IMR-90 (cell line): ENCODE measurements at regions of chr2 and their contacts with region 1.

Region 1: DNA sequence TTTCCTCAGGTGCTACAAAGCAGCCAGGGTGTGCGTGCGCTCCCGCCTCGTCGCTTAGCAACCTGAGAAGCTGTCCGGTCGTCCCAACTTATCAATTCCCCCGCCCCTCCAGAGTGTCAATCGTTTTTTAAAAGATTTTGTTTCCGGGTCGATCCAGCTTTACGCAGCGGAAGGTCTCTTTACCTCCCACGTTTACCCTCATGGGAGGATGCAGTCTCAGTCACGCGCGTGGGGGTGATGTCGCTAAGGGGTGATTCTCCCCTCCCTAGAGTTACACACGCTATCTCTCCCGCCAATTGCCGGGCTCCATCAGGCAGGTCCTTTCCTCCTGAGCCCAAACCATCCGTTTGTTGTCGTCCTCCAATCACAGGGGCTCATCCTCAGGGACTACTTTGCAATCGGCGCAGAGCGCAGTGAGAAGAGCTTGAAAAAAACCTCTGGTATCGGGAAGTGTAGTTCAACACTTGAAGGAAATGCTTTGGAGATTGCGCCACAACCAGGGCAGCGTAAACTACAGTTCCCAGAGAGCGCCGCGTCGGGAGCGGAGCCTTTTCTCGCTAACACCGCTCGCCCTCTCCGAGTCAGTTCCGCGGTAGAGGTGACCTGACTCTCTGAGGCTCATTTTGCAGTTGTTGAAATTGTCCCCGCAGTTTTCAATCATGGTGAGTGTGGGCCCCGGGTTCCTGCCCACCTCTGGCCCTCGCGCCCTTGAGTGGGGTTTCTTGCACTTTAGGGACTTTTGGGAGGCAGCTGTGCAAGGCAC is at the starts of genes MDH1 and WDPCP:
- DNase-seq: peak; percentile 100
- ATAC-seq: peak; percentile 93
- H3K4me3 ChIP-seq: peak within 1 kb of the TSS; percentile 77
- H3K27ac ChIP-seq: peak within 1 kb of the TSS; percentile 68
- H3K4me1 ChIP-seq: peaks cover 2% of the 10 kb centered on the region; the same call in 1 of the 2 replicates
- H3K27me3 ChIP-seq: no peaks in the 10 kb centered on the region
- CTCF ChIP-seq: no peak
- POLR2A ChIP-seq: peak; percentile 59; the same call in 1 of the 2 replicates
- RAD21 ChIP-seq: no peak
- total RNA-seq, gene MDH1: 212 and 248 TPM in 2 replicates
- total RNA-seq, gene WDPCP: 7.8 and 10.2 TPM in 2 replicates

Region 2: DNA sequence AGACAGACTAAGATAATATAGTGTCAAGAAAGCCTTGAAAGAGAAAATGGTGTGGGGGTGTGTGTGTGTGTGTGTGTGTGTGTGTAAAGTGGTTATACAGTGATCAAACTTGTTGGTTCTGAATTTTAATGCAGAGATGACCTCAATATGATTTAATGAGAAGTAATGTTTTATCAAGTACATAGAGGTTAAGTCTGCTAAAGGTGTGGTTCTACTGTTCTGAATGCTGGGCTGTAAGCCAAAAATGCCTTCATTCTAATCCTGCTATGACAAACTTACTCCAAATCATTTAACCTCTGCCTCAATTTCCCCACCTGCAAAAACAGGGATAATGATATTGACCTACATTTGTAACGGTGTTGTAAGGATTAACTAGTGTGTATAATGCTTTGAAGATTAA is 88.2 kb before region 1 on chr2:
- CTCF ChIA-PET with region 1: no interaction called
- POLR2A ChIA-PET with region 1: no interaction called
- dilution Hi-C with region 1: no loop called
- in situ Hi-C with region 1: no loop called
- intact Hi-C with region 1: no loop called
- DNase-seq: no peak
- ATAC-seq: no peak
- H3K4me3 ChIP-seq: no peak overlapping the region
- H3K27ac ChIP-seq: no peak overlapping the region
- H3K4me1 ChIP-seq: no peaks in the 10 kb centered on the region
- H3K27me3 ChIP-seq: no peaks in the 10 kb centered on the region
- CTCF ChIP-seq: no peak
- POLR2A ChIP-seq: no peak
- RAD21 ChIP-seq: no peak

Region 3: GRCh38 chr2:63790913-63791312 is 202.3 kb after region 1 on chr2:
- CTCF ChIA-PET with region 1: no interaction called
- POLR2A ChIA-PET with region 1: no interaction called
- dilution Hi-C with region 1: no loop called
- in situ Hi-C with region 1: no loop called
- intact Hi-C with region 1: no loop called
- DNase-seq: peak; percentile 91
- ATAC-seq: peak; percentile 85
- H3K4me3 ChIP-seq: no peak overlapping the region
- H3K27ac ChIP-seq: peak overlapping the region; percentile 12; the same call in 1 of the 2 replicates
- H3K4me1 ChIP-seq: peaks cover 16% of the 10 kb centered on the region
- H3K27me3 ChIP-seq: no peaks in the 10 kb centered on the region
- CTCF ChIP-seq: no peak
- POLR2A ChIP-seq: no peak
- RAD21 ChIP-seq: no peak

Region 4: DNA sequence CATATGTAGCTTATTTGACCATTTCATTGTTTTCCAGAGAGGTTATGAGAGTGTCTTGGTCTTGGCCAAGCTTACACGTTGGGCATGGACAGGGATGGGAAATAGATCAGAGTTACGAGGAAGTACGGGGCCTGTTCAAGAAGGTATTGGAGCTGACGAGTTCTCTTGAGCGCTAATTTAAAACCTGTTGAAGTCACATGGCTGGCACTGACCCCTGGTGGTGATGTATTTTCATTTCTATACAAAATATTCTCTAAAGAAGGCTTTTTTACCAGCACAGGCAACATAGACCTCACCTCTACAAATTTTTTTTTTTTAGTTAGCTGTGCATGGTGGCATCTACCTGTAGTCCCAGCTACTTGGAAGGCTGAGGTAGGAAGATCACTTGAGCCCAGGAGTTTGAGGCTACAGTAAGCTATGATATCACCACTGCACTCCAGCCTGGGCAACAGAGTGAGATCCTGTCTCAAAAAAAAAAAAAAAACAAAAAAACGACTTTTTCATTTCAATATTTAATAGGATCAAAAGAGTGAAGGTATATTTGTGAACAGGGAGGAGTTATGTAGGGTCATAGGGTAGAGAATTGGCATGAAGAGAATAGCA is 272.8 kb after region 1 on chr2:
- CTCF ChIA-PET with region 1: interaction called, 4 read pairs
- POLR2A ChIA-PET with region 1: no interaction called
- dilution Hi-C with region 1: no loop called
- in situ Hi-C with region 1: no loop called
- intact Hi-C with region 1: loop called (anchors 2 kb)
- DNase-seq: peak; percentile 58
- ATAC-seq: peak; percentile 52
- H3K4me3 ChIP-seq: no peak overlapping the region
- H3K27ac ChIP-seq: no peak overlapping the region
- H3K4me1 ChIP-seq: peaks cover 13% of the 10 kb centered on the region
- H3K27me3 ChIP-seq: no peaks in the 10 kb centered on the region
- CTCF ChIP-seq: peak; percentile 61
- POLR2A ChIP-seq: no peak
- RAD21 ChIP-seq: peak; percentile 70